Adrenal gland (tissue), 19 donors: ENCODE measurements at regions of chr2 and their contacts with region 1.

Region 1: DNA sequence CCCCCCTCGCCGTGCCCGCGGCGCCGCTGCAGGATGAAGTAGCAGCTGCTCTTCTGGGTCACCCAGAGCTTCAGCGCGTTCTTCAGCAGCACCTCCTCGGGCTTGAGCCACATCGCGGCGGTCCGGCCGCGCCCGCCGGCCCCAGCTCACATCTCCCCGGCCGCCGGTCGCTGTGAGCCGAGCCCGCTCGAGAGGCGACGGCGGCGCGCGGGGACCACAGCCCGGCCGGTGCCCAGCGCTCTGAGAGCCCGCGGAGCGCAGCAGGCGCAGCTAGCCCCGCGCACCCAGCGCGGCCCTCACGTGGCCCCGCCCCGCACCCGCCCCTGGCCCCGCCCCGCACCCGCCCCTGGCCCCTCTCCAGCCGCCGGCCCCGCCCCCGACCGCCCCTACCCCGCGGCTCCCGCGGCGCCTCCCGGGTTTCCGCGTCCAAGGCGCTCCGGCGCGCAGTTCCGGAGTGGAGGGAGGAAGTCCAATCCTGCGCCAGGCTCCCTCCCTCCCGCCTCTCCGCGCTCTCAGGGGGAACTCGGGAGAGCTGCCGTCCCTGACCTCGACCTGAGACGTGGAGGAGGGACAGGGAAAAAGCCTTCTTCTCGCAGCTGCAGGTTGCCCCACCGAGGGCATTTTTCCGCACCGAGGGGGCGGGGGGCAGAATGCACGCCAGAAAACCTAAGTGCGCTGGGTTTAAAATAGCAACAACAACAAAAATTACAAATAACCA is at the start of gene TBC1D8:
- DNase-seq: peak; percentile 84 to 89 (median 88)
- H3K4me3 ChIP-seq: peak within 1 kb of the TSS in 2 of 4 donors; percentile 62 to 94
- H3K27ac ChIP-seq: peak within 1 kb of the TSS in 4 of 5 donors; percentile 26 to 91 (median 72)
- H3K4me1 ChIP-seq: peaks cover 0 to 32% of the 10 kb centered on the region in 2 donors
- H3K27me3 ChIP-seq: no peaks in the 10 kb centered on the region
- CTCF ChIP-seq: peak in 1 of 6 experiments; percentile 5
- POLR2A ChIP-seq: peak; percentile 54 to 82
- total RNA-seq, gene TBC1D8: 7.6 to 17.2 (median 10.5) TPM

Region 2: GRCh38 chr2:100924520-100925451 is 226.5 kb before region 1 on chr2:
- intact Hi-C with region 1: no loop called
- DNase-seq: peak; percentile 66 to 91 (median 83)
- H3K4me3 ChIP-seq: peak overlapping the region in 2 of 4 donors; percentile 13 to 37
- H3K27ac ChIP-seq: peak overlapping the region; percentile 60 to 97 (median 78)
- H3K4me1 ChIP-seq: peaks cover 17 to 18% of the 10 kb centered on the region in 2 donors
- H3K27me3 ChIP-seq: no peaks in the 10 kb centered on the region
- CTCF ChIP-seq: no peak
- POLR2A ChIP-seq: peak in 1 of 2 donors; percentile 86

Region 3: DNA sequence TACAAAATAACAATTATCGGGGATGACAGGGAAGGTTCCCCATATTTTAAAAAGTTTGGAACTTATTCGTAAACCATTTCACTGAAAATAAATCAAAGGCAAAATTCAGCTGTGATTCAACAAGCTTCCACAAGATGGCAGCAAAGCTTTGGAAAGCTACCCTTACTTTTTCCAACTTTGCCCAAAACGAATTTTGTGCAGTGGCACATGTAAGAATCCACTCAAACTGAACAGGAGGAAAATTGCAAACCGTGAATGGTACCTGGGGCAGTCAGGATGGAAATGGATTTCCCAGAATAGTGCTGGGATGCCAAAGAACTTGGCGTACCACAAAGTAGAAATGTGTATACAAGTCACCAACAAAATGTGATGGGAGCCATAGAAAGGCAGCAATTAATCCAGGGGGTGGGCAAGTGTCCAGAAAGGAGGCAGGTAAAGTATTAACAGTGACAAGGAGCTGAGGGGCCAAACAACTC is 138.6 kb before region 1 on chr2:
- intact Hi-C with region 1: loop called in 1 of 2 experiments (anchors 5 kb)
- DNase-seq: peak in 6 of 7 donors; percentile 27 to 65 (median 42)
- H3K4me3 ChIP-seq: no peak overlapping the region
- H3K27ac ChIP-seq: no peak overlapping the region
- H3K4me1 ChIP-seq: no peaks in the 10 kb centered on the region
- H3K27me3 ChIP-seq: no peaks in the 10 kb centered on the region
- CTCF ChIP-seq: peak; percentile 78 to 91 (median 85)
- POLR2A ChIP-seq: no peak

Region 4: DNA sequence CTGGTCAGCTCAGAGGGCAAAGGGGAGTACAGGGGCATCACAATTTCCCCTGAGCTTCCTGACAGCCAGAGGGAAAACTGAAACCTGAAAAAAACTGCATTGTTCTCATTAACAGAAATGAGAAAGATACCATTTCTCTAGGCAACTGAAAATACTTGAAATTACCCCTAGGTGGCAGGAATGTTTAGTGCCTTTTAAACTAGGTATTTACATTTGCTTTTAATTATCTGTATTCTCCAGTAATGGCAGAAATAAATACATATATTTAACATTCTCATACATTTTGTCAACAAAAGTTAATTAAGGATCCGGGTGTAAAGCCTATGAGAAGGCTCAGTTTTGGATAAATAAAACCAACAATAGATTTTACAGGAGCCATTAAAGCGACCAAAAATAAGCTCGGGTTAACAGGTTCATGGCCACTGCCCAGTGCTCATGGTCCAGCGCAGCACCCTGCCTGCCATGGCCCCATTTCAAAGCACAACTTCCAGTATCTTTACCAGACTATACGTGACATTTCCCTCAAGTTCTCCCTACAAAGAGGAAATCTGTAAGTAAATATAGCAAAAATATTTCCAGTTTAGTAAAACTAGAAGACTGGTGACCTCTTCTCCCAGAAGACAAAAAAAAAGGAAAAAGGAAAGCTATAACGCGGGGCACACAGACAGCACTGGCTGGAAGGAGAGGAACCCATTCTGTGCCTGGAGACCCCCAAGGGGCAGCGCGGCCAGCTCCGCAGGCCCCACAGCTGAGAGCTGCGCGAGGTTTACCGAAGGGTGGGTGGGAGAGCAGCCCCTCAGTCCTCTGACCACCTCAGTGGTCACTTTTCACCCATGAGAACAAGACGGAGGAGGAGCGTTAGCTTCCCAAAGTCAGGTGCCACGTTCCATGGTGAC is 114.5 kb before region 1 on chr2:
- intact Hi-C with region 1: loop called (anchors 5 kb)
- DNase-seq: peak in 1 of 7 donors; percentile 24
- H3K4me3 ChIP-seq: no peak overlapping the region
- H3K27ac ChIP-seq: no peak overlapping the region
- H3K4me1 ChIP-seq: no peaks in the 10 kb centered on the region
- H3K27me3 ChIP-seq: no peaks in the 10 kb centered on the region
- CTCF ChIP-seq: peak; percentile 54 to 74 (median 64)
- POLR2A ChIP-seq: no peak